Thyroid gland (tissue), 4 donors: ENCODE measurements at regions of chr2 and their contacts with region 1.

Region 1: GRCh38 chr2:30721668-30722647 is 85.3 kb downstream of the CAPN13 start:
- DNase-seq: no peak
- H3K4me3 ChIP-seq: no peak overlapping the region
- H3K27ac ChIP-seq: no peak overlapping the region
- H3K4me1 ChIP-seq: no peaks in the 10 kb centered on the region
- H3K27me3 ChIP-seq: no peaks in the 10 kb centered on the region
- CTCF ChIP-seq: no peak
- POLR2A ChIP-seq: no peak

Region 2: DNA sequence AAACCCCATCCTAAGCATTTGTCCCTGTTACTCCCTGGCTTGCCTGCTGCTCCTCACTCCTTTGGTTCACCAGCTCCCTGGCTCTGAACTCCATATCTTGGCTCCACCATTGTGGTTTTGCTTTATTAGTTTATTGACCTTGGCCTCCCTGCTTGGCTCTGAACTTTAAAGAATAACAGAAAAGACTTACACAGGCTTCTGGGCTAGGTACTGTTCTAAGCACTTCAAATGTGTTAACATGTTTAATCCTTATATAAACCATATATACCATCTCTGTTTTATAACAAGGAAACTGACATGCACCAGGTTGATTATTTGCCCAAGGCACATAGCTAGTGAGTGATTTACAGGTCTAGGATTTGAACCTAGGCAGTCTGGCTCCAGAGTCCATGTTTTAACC is 235.0 kb after region 1 on chr2:
- intact Hi-C with region 1: loop called (anchors 10 kb)
- DNase-seq: no peak
- H3K4me3 ChIP-seq: no peak overlapping the region
- H3K27ac ChIP-seq: no peak overlapping the region
- H3K4me1 ChIP-seq: no peaks in the 10 kb centered on the region
- H3K27me3 ChIP-seq: no peaks in the 10 kb centered on the region
- CTCF ChIP-seq: no peak
- POLR2A ChIP-seq: no peak